ENCODE measurements at regions of chr6 and their contacts with region 1.

Region 1: GRCh38 chr6:163284151-163284550 is 130.4 kb upstream of the QKI start:
- DNase-seq: no peak
- H3K4me3 Mint-ChIP-seq: no peak overlapping the region
- H3K27ac Mint-ChIP-seq: no peak overlapping the region
- H3K4me1 Mint-ChIP-seq: peaks cover 23% of the 10 kb centered on the region
- H3K27me3 Mint-ChIP-seq: no peaks in the 10 kb centered on the region
- CTCF ChIP-seq: no peak

Region 2: DNA sequence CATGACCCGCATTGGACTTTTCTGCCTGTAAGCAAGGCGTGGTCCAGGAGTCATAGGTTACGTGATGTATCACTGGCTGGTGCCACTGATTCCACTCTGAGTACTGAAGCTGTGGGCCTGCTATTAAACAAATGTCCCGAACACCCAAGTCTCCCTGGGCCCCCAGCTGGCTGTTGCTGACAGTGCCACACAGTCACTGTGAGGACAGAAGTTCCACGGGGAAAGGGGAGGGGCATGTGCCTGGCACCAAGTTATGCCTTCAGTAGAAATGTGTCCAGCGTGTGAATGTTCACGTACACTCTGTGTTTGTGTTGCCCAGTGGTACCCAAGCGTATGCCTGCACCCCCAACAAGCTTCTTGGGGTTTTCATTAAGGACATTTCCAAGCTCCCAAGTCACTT is 41.1 kb before region 1 on chr6:
- CTCF ChIA-PET with region 1: no interaction called
- intact Hi-C with region 1: loop called (anchors 5 kb)
- DNase-seq: no peak
- H3K4me3 Mint-ChIP-seq: no peak overlapping the region
- H3K27ac Mint-ChIP-seq: no peak overlapping the region
- H3K4me1 Mint-ChIP-seq: no peaks in the 10 kb centered on the region
- H3K27me3 Mint-ChIP-seq: no peaks in the 10 kb centered on the region
- CTCF ChIP-seq: no peak